Caco-2 (cell line): ENCODE measurements at regions of chr2 and their contacts with region 1.

Region 1: DNA sequence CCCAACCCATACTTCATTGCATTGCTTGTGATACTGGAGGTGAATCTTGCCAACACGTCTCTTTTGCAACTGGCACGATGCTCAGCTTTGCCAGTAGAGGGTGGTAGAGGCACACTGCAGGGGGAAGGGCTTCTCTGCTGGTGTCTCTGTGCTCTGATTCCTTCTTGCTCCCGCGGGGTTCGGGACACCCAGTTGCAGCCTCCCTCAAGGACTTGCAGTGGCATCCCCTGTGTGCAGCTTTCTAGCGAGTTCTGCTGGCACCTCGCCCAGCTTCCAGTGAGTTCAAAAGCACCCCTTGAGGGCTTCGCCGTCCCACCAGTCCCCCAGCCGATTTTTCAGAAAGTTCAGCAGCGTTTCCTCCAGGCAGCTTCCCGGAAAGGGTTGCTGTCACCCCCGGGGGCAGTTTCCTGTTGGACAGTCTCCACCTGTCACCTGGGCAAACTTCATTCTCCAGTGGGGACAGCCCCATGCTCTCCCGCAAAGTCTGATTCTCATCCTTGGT is 35.3 kb upstream of the EN1 start:
- DNase-seq: peak; percentile 76 to 80
- H3K4me3 ChIP-seq: 0 out of 2 replicates have a peak overlapping the region, but pooled peaks have one; percentile 14
- H3K4me3 Mint-ChIP-seq: peak overlapping the region; percentile 70
- H3K27ac Mint-ChIP-seq: no peak overlapping the region
- H3K4me1 ChIP-seq: no peaks in the 10 kb centered on the region
- H3K4me1 Mint-ChIP-seq: no peaks in the 10 kb centered on the region
- H3K27me3 ChIP-seq: no peaks in the 10 kb centered on the region
- H3K27me3 Mint-ChIP-seq: peaks cover 2% of the 10 kb centered on the region
- CTCF ChIP-seq: peak; percentile 90 to 97

Region 2: GRCh38 chr2:118784860-118785259 is 97.9 kb before region 1 on chr2:
- CTCF ChIA-PET with region 1: no interaction called
- POLR2A ChIA-PET with region 1: no interaction called
- intact Hi-C with region 1: no loop called
- DNase-seq: no peak
- H3K4me3 ChIP-seq: no peak overlapping the region
- H3K4me3 Mint-ChIP-seq: no peak overlapping the region
- H3K27ac Mint-ChIP-seq: no peak overlapping the region
- H3K4me1 ChIP-seq: no peaks in the 10 kb centered on the region; the same call in 1 of the 2 replicates
- H3K4me1 Mint-ChIP-seq: peaks cover 6% of the 10 kb centered on the region
- H3K27me3 ChIP-seq: no peaks in the 10 kb centered on the region
- H3K27me3 Mint-ChIP-seq: peaks cover 11% of the 10 kb centered on the region
- CTCF ChIP-seq: no peak

Region 3: GRCh38 chr2:118847497-118848172 is 35.1 kb before region 1 on chr2 and contains the start of gene EN1:
- CTCF ChIA-PET with region 1: no interaction called
- POLR2A ChIA-PET with region 1: no interaction called
- intact Hi-C with region 1: no loop called
- DNase-seq: peak; percentile 41
- H3K4me3 ChIP-seq: peak within 1 kb of the TSS; percentile 28
- H3K4me3 Mint-ChIP-seq: peak within 1 kb of the TSS; percentile 62
- H3K27ac Mint-ChIP-seq: no peak within 1 kb of the TSS
- H3K4me1 ChIP-seq: no peaks in the 10 kb centered on the region
- H3K4me1 Mint-ChIP-seq: peaks cover 6% of the 10 kb centered on the region
- H3K27me3 ChIP-seq: no peaks in the 10 kb centered on the region; the same call in 1 of the 2 replicates
- H3K27me3 Mint-ChIP-seq: peaks cover 17% of the 10 kb centered on the region
- CTCF ChIP-seq: no peak
- total RNA-seq, gene EN1: 0.16 and 0.37 TPM in 2 replicates

Region 4: DNA sequence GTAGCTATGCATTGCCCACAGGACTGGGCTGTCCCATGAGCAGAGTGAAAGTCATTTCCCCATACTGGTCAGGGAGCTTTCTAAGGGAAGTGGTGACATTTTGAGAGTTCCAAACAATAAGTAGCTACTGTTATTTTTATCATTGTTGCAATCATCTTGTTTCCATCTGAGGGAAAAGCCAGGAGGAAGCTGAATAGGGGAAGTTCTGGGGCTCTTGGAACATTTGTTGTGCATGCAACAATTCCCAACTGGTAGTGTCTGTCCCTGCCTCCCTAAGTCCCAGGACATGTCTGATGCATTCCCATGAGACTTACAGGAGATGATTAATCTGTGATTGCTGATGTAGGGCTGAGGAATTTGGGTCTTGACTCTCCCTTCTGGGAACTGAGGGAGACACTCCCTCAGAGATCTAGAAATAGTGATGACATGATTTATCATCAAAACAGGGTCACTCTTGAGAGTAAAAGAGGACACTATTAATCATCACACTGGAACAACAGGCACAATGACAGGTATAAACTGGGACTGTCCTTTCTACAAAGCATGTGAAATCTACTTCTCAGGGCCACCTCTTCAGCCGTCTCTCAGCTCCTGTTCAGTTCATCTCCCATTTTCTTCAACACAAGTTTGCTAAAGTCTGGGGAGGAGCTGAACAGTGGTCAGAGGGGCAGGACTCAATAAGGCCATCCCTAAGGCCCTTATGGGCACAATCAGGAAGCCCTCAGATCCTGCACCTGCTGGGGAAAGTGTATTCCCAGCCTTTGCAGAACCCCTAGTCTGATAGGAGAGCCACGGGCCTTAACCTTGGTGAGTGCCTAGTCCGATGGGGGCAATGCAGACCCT is 31.3 kb after region 1 on chr2:
- CTCF ChIA-PET with region 1: interaction called, 3 read pairs
- POLR2A ChIA-PET with region 1: no interaction called
- intact Hi-C with region 1: loop called (anchors 2 kb)
- DNase-seq: no peak
- H3K4me3 ChIP-seq: no peak overlapping the region
- H3K4me3 Mint-ChIP-seq: peak overlapping the region; percentile 48
- H3K27ac Mint-ChIP-seq: peak overlapping the region; percentile 83
- H3K4me1 ChIP-seq: peaks cover 23% of the 10 kb centered on the region
- H3K4me1 Mint-ChIP-seq: peaks cover 18% of the 10 kb centered on the region
- H3K27me3 ChIP-seq: no peaks in the 10 kb centered on the region
- H3K27me3 Mint-ChIP-seq: no peaks in the 10 kb centered on the region
- CTCF ChIP-seq: no peak

Region 5: GRCh38 chr2:118929059-118929458 is 46.3 kb after region 1 on chr2:
- CTCF ChIA-PET with region 1: no interaction called
- POLR2A ChIA-PET with region 1: no interaction called
- intact Hi-C with region 1: no loop called
- DNase-seq: no peak
- H3K4me3 ChIP-seq: no peak overlapping the region
- H3K4me3 Mint-ChIP-seq: no peak overlapping the region
- H3K27ac Mint-ChIP-seq: peak overlapping the region; percentile 21
- H3K4me1 ChIP-seq: peaks cover 5% of the 10 kb centered on the region
- H3K4me1 Mint-ChIP-seq: peaks cover 13% of the 10 kb centered on the region
- H3K27me3 ChIP-seq: no peaks in the 10 kb centered on the region
- H3K27me3 Mint-ChIP-seq: no peaks in the 10 kb centered on the region
- CTCF ChIP-seq: no peak

Region 6: DNA sequence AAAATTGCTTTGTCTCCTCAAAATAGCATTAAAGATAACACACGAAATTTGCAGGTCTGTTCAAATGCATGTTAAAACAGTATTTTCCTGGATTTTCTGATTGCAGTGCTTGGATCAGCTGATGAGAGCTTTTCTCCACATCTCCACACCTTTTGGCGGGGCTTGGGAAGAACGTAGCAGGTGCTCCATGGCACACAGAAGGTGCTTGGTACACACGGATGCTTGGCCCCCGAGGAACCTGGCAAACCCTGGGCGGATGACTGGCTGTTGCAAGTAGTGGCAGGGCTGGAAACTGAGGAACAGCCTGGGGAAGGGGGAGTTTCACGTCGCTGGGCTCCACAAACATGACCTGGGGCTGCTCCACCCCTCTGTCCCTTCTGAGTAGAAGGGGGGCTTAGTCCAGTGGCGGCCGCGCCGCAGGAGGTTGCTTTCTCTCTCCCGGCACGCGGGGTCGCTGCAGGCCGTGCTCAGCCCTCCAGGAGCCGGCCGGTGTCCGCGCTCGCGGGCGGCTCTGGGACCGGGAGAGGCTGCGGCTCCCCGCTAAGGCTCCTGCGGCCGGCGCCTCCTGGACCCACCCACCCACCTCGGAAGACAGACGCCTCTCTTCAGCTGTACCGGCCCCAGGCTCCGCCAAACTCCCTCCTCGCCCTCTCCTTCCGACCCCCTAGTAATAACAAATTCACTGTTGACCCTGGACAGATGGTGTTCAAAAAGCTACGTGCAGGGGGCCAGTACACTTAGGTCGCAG is 128.6 kb after region 1 on chr2:
- CTCF ChIA-PET with region 1: interaction called, 10 read pairs
- POLR2A ChIA-PET with region 1: no interaction called
- intact Hi-C with region 1: loop called (anchors 1 kb)
- DNase-seq: peak; percentile 58 to 80
- H3K4me3 ChIP-seq: no peak overlapping the region
- H3K4me3 Mint-ChIP-seq: peak overlapping the region; percentile 24
- H3K27ac Mint-ChIP-seq: no peak overlapping the region
- H3K4me1 ChIP-seq: no peaks in the 10 kb centered on the region; the same call in 1 of the 2 replicates
- H3K4me1 Mint-ChIP-seq: peaks cover 11% of the 10 kb centered on the region
- H3K27me3 ChIP-seq: peaks cover 2% of the 10 kb centered on the region
- H3K27me3 Mint-ChIP-seq: peaks cover 10% of the 10 kb centered on the region
- CTCF ChIP-seq: peak; percentile 74 to 76

Region 7: DNA sequence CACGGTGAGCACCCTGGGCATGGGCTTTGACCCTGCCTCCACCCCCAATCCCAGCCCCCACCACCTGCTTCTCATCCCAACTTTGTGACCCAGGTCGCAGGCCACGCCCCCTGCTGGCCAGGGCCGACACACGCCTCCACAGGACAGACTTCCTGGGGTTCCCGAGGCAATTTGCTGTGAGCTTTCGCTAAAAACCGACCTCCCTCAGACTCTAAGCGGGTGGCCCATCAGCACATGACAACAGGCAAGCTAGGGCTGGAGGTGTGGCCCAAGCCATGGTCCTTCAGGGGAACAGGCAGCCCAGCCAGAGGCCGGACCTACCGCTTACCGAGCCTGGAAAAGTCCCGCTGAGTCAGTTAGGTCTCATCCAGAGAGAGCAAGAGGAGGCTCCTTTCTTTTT is 243.9 kb after region 1 on chr2:
- CTCF ChIA-PET with region 1: no interaction called
- POLR2A ChIA-PET with region 1: no interaction called
- intact Hi-C with region 1: loop called (anchors 1 kb)
- DNase-seq: peak; percentile 53 to 63
- H3K4me3 ChIP-seq: no peak overlapping the region
- H3K4me3 Mint-ChIP-seq: no peak overlapping the region
- H3K27ac Mint-ChIP-seq: no peak overlapping the region
- H3K4me1 ChIP-seq: no peaks in the 10 kb centered on the region
- H3K4me1 Mint-ChIP-seq: no peaks in the 10 kb centered on the region
- H3K27me3 ChIP-seq: peaks cover 1% of the 10 kb centered on the region; the same call in 1 of the 2 replicates
- H3K27me3 Mint-ChIP-seq: peaks cover 11% of the 10 kb centered on the region
- CTCF ChIP-seq: peak; percentile 56

Region 8: DNA sequence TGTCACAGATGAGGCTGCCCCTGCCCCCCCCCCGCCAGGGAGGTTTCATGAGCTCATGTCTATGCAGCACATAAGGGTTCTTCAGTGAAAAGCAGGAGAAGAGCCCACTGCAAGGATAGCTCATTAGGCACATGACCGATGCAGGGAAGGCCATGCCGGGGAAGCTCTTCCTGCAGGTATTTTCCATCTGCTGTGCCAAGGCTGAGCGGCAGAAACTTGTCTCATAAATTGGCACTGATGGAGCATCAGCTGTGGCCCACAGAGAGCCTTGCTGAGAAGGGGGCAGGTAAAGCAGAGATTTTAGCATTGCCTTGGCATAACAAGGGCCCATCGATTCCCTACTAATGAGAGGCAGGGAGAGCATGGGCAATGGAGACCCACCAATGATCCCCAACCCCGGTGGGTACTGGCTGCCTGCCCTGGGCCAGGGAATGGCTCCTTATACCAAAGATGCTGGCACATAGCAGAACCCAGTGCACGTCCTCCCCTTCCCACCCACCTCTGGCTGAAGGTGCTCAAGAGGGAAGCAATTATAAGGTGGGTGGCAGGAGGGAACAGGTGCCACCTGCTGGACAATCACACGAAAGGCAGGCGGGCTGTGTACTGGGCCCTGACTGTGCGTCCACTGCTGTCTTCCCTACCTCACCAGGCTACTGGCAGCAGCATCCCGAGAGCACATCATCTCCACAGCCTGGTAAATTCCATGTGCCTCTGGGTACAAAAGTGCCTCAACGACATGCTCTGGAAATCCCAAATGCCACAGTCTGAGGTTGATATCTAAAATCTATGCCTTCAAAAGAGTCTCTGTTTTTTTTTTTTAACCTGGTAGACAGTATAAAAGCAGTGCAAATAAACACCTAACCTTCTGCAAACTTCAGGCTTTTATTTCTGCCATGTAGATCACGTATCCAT is 382.3 kb after region 1 on chr2:
- CTCF ChIA-PET with region 1: interaction called, 3 read pairs
- POLR2A ChIA-PET with region 1: no interaction called
- intact Hi-C with region 1: loop called (anchors 1 kb)
- DNase-seq: peak; percentile 64 to 77
- H3K4me3 ChIP-seq: no peak overlapping the region
- H3K4me3 Mint-ChIP-seq: no peak overlapping the region
- H3K27ac Mint-ChIP-seq: no peak overlapping the region
- H3K4me1 ChIP-seq: no peaks in the 10 kb centered on the region
- H3K4me1 Mint-ChIP-seq: peaks cover 9% of the 10 kb centered on the region
- H3K27me3 ChIP-seq: no peaks in the 10 kb centered on the region
- H3K27me3 Mint-ChIP-seq: no peaks in the 10 kb centered on the region
- CTCF ChIP-seq: peak; percentile 92 to 93

Region 9: DNA sequence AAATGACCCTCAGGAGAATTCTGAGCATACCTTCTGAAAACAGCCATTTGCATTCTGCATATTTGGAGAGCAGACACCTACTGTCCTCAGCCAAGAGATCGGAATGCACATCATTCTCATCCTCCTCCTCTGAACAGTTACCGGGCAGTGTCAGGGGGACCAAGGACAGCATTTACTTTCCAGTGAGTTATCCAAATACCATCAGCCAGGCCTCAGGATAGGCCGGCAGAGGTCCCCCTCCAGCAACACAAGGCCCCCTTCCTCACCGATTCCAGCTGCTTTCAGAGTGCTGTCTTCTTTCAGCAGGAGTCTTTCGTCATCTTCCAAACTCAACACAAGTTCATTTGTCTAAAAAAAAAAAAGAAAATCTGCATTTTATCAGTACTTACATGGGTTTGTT is 428.6 kb after region 1 on chr2:
- CTCF ChIA-PET with region 1: interaction called, 15 read pairs
- POLR2A ChIA-PET with region 1: no interaction called
- intact Hi-C with region 1: loop called (anchors 1 kb)
- DNase-seq: peak in 1 of 2 experiments; percentile 33
- H3K4me3 ChIP-seq: no peak overlapping the region
- H3K4me3 Mint-ChIP-seq: no peak overlapping the region
- H3K27ac Mint-ChIP-seq: no peak overlapping the region
- H3K4me1 ChIP-seq: peaks cover 17% of the 10 kb centered on the region; the same call in 1 of the 2 replicates
- H3K4me1 Mint-ChIP-seq: peaks cover 23% of the 10 kb centered on the region
- H3K27me3 ChIP-seq: no peaks in the 10 kb centered on the region
- H3K27me3 Mint-ChIP-seq: no peaks in the 10 kb centered on the region
- CTCF ChIP-seq: peak in 1 of 2 experiments; percentile 37